PC-3 (cell line): ENCODE measurements at regions of chr11 and their contacts with region 1.

Region 1: DNA sequence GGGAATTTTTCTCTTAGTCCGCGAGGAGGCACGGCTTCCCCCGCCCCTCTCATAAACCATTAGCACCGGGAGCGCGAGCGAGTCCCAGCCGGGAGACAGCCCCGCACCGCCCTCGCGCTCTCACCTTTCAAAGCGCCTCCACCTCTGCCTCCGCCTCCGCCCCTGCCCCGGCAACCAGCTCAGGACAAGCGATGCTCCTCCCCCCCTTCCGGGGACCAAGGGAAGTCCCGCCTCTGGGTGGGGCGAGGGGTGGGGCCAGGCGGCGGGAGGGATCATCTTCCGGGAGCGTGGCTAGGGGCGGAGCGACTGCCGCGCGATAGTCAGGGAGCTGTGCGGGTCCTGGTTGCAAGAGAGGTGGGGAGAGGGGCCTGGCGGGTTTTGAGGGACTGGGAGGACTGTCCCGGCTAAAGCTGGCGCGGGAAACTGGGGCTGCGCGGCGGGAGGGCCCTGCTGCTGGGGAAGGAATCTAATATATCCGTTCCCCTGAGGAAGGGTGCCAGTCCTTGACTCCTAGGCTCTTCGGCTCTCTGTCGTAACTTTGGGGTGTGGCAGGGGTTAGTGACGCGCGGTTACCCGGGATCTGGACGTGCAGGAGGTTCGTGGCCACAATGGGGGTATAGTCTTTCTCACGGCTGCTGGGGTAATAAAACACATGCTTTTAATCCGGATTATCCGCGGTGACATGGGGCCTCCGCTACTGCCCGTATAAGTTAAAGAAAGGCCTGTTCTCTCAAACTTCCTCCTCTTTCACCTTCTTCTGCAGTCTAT is at the starts of genes CCDC82 and JRKL:
- DNase-seq: peak; percentile 99
- ATAC-seq: peak; percentile 91
- H3K4me3 ChIP-seq: peak within 1 kb of the TSS; percentile 89
- H3K27ac ChIP-seq: peak within 1 kb of the TSS; percentile 56
- H3K4me1 ChIP-seq: peaks cover 45% of the 10 kb centered on the region
- H3K27me3 ChIP-seq: no peaks in the 10 kb centered on the region
- CTCF ChIP-seq: no peak
- total RNA-seq, gene CCDC82: 13.5 and 14.5 TPM in 2 replicates
- total RNA-seq, gene JRKL: 4.7 and 5.1 TPM in 2 replicates

Region 2: GRCh38 chr11:95790123-95790932 is 599.6 kb before region 1 on chr11 and contains the start of gene CEP57:
- CTCF ChIA-PET with region 1: interaction called, 4 read pairs
- POLR2A ChIA-PET with region 1: interaction called, 6 read pairs
- intact Hi-C with region 1: loop called (anchors 1 kb)
- DNase-seq: peak; percentile 99
- ATAC-seq: peak; percentile 73
- H3K4me3 ChIP-seq: peak within 1 kb of the TSS; percentile 86
- H3K27ac ChIP-seq: peak within 1 kb of the TSS; percentile 87
- H3K4me1 ChIP-seq: peaks cover 42% of the 10 kb centered on the region
- H3K27me3 ChIP-seq: no peaks in the 10 kb centered on the region
- CTCF ChIP-seq: no peak
- total RNA-seq, gene CEP57: 36.7 and 38.1 TPM in 2 replicates

Region 3: DNA sequence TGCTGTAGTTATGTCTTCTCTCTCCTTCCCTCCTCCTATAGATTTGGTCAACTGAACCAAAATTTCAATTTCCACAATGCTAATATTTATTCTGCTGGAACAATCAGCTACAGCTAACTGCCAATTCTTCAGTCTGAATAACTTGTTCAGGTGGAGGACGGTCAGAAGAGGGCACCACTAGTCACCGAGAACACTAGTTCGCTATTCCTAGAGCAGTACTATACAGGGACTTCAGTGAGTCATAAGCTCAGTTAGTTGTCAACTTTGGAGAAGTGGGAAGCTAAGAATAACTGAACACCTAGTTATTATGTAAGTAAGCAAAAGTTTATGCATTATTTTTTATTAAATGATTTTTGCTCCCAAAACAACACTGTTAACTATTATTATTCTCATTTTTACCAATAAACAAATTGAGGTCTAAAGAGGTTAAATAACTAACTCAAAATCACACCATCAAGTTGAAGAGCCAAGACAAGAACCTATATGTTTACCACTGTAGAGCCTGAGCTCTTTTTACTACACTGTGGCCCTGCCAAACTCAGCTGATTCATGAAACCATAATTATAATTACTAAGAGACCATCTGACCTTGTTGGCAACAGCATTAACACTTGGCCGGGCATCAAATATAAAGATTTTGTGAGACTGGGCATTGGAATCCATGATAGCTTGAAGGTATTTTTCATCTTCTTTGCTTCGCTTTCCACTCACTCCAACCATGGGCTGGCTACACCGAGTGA is 540.6 kb before region 1 on chr11:
- CTCF ChIA-PET with region 1: interaction called, 13 read pairs
- POLR2A ChIA-PET with region 1: interaction called, 10 read pairs
- intact Hi-C with region 1: no loop called
- DNase-seq: peak; percentile 88
- ATAC-seq: peak; percentile 86
- H3K4me3 ChIP-seq: peak overlapping the region; percentile 26; the same call in 1 of the 2 replicates
- H3K27ac ChIP-seq: peak overlapping the region; percentile 77
- H3K4me1 ChIP-seq: peaks cover 30% of the 10 kb centered on the region
- H3K27me3 ChIP-seq: no peaks in the 10 kb centered on the region
- CTCF ChIP-seq: peak; percentile 92

Region 4: GRCh38 chr11:95977534-95978174 is 412.2 kb before region 1 on chr11:
- CTCF ChIA-PET with region 1: no interaction called
- POLR2A ChIA-PET with region 1: no interaction called
- intact Hi-C with region 1: loop called (anchors 5 kb)
- DNase-seq: peak; percentile 98
- ATAC-seq: peak; percentile 97
- H3K4me3 ChIP-seq: peak overlapping the region; percentile 17; the same call in 1 of the 2 replicates
- H3K27ac ChIP-seq: peak overlapping the region; percentile 76
- H3K4me1 ChIP-seq: peaks cover 27% of the 10 kb centered on the region
- H3K27me3 ChIP-seq: no peaks in the 10 kb centered on the region
- CTCF ChIP-seq: no peak

Region 5: GRCh38 chr11:96054870-96055705 is 334.8 kb before region 1 on chr11:
- CTCF ChIA-PET with region 1: interaction called, 4 read pairs
- POLR2A ChIA-PET with region 1: no interaction called
- intact Hi-C with region 1: loop called (anchors 2 kb)
- DNase-seq: peak; percentile 77
- ATAC-seq: peak; percentile 62
- H3K4me3 ChIP-seq: no peak overlapping the region
- H3K27ac ChIP-seq: peak overlapping the region; percentile 54
- H3K4me1 ChIP-seq: peaks cover 45% of the 10 kb centered on the region
- H3K27me3 ChIP-seq: no peaks in the 10 kb centered on the region
- CTCF ChIP-seq: peak; percentile 86

Region 6: GRCh38 chr11:96242971-96243647 is 146.8 kb before region 1 on chr11:
- CTCF ChIA-PET with region 1: no interaction called
- POLR2A ChIA-PET with region 1: no interaction called
- intact Hi-C with region 1: loop called (anchors 1 kb)
- DNase-seq: peak; percentile 95
- ATAC-seq: peak; percentile 97
- H3K4me3 ChIP-seq: peak overlapping the region; percentile 58
- H3K27ac ChIP-seq: peak overlapping the region; percentile 80
- H3K4me1 ChIP-seq: peaks cover 43% of the 10 kb centered on the region
- H3K27me3 ChIP-seq: no peaks in the 10 kb centered on the region
- CTCF ChIP-seq: no peak